Sigmoid colon (tissue), 7 donors: ENCODE measurements at regions of chr1 and their contacts with region 1.

Region 1: DNA sequence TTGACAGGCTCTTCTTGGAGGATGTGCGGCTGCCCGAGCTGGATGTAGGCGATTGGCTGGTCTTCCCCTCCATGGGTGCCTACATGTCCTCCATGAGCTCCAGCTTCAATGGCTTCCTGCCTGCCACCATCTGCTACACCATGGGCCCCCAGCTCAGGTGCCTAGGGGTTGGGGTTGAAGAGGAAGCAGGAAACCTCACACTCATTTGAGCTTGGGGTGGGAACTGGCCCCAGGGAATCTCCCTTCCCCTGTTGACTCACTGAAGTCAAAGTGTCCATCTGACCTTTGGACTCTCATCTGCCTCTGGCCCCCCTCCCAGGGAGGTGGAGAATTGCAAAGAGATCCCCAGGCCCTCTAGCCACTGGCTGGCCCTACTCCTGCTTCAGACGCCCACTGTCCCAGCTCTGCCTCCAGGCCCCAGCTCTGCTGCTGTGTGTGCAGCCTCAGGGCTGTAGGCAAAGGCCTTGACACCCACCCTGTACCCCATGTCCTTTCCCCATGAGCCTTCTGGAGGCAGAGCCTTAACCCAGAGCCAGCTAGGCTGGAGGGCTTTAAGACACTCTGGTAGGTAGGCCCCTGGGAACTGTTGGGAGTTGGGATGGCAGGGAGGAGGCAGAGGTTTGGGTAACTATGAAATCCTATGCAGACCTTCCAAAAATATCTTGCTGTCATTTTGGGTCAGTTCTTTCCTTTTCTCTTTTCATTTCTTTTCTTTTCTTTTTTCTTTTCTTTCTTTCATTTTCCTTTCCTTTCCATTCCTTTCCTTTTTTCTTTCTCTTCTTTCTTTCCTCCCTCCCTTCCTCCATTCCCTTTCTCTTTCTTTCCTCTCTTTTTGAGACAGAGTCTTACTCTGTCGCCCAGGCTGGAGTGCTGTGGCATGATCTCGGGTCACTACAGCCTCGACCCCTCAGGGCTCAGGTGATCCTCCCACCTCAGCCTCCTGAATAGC is 66.9 kb upstream of the TINAGL1 start:
- DNase-seq: no peak
- H3K4me3 ChIP-seq: no peak overlapping the region
- H3K27ac ChIP-seq: no peak overlapping the region
- H3K4me1 ChIP-seq: no peaks in the 10 kb centered on the region
- H3K27me3 ChIP-seq: peaks cover 0 to 4% (median 0%) of the 10 kb centered on the region in 3 donors
- CTCF ChIP-seq: no peak
- EP300 ChIP-seq: no peak
- POLR2A ChIP-seq: no peak

Region 2: GRCh38 chr1:31669786-31670592 is 160.6 kb after region 1 on chr1:
- intact Hi-C with region 1: no loop called
- DNase-seq: peak; percentile 94
- H3K4me3 ChIP-seq: peak overlapping the region in 3 of 4 donors; percentile 26 to 32 (median 28)
- H3K27ac ChIP-seq: peak overlapping the region; percentile 77 to 82 (median 80)
- H3K4me1 ChIP-seq: peaks cover 0 to 95% (median 82%) of the 10 kb centered on the region in 4 donors
- H3K27me3 ChIP-seq: no peaks in the 10 kb centered on the region
- CTCF ChIP-seq: peak in 1 of 4 experiments; percentile 26
- EP300 ChIP-seq: no peak
- POLR2A ChIP-seq: peak in 1 of 2 donors; percentile 11

Region 3: GRCh38 chr1:33482412-33482811 is 1973.0 kb after region 1 on chr1:
- intact Hi-C with region 1: loop called (anchors 10 kb)
- DNase-seq: no peak
- H3K4me3 ChIP-seq: no peak overlapping the region
- H3K27ac ChIP-seq: no peak overlapping the region
- H3K4me1 ChIP-seq: no peaks in the 10 kb centered on the region
- H3K27me3 ChIP-seq: no peaks in the 10 kb centered on the region
- CTCF ChIP-seq: no peak
- EP300 ChIP-seq: no peak
- POLR2A ChIP-seq: no peak